ENCODE measurements at regions of chr1 and their contacts with region 1.

Region 1: DNA sequence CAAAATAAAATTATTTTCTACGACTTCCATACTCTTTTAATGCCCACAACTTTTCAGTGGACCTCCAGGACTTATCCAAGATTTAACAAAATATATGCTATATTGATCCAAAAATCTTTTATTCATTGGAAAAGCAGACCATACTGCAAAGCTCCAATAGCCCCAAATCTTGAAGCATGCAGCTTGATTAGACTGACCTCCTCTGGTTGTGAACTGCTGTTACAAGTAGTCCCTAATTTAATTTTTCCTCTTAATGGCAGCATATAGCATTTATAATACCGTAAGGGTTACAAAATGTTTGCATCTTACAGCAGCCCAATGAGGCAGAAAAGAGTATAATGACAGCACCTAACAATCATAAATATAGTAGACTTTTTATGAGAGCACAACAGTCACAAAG is 49.8 kb downstream of the TPR start:
- DNase-seq: peak; percentile 31
- H3K4me3 ChIP-seq: no peak overlapping the region
- H3K27ac ChIP-seq: no peak overlapping the region
- H3K4me1 ChIP-seq: no peaks in the 10 kb centered on the region
- H3K27me3 ChIP-seq: no peaks in the 10 kb centered on the region
- CTCF ChIP-seq: peak; percentile 18 to 35
- POLR2A ChIP-seq: no peak

Region 2: DNA sequence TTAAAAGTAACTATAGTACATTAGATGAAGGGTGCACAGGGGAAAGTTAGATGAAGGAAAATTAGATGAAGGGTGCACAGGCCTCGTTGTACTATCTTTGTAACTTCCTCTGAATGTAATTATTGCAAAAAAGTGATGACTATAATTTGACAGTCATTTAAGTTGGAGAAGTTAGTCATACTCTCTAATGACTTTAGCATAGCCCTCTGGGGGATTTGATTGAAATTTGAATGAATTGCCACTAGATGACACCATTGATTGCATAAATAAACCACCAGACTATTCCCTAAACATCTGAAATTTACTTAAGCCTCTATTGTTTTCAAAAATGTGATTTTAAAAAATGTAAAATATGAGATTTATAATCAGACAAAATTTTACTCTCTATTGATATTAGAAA is 52.8 kb before region 1 on chr1:
- CTCF ChIA-PET with region 1: interaction called, 5 read pairs
- POLR2A ChIA-PET with region 1: no interaction called
- dilution Hi-C with region 1: no loop called
- intact Hi-C with region 1: loop called (anchors 2 kb)
- DNase-seq: peak; percentile 5
- H3K4me3 ChIP-seq: no peak overlapping the region
- H3K27ac ChIP-seq: no peak overlapping the region
- H3K4me1 ChIP-seq: no peaks in the 10 kb centered on the region
- H3K27me3 ChIP-seq: no peaks in the 10 kb centered on the region
- CTCF ChIP-seq: no peak
- POLR2A ChIP-seq: no peak